Esophagus muscularis mucosa (tissue), 4 donors: ENCODE measurements at regions of chr22 and their contacts with region 1.

Region 1: DNA sequence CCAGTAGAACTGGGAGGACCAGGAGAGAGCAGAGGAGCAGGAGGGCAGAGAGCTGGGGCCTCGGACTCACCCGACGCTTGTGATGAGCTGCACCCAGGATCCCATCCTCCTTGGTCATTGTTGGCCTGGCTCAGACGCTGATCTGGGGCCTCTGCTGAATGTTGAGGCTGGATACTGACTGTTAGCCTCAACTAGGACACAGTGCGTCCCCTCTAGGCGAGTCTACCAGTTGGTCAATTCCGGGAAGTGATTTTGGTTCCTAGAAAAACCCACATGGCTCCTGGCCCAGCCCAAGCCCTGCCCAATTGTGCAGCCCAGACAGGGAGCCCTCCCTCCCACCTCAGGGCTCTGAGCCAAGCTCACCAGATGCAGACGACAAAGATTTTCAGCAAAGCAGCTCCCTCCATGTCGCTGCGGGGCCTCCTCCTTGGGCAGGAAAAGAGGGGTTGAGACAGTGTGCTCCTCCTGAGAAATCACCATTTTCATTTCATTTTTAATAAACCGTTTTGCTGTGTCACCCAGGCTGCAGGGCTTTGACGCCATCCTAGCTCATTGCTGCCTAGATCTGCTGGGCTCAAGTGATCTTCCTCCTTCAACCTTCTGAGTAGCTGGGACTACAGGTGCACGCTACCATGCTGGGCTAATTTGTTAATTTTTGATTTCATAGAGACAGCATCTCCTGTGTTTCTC is at the start of gene APOL4:
- DNase-seq: no peak
- H3K4me3 ChIP-seq: peak within 1 kb of the TSS in 2 of 4 donors; percentile 22 to 35
- H3K27ac ChIP-seq: peak within 1 kb of the TSS in 3 of 4 donors; percentile 13 to 57 (median 51)
- H3K4me1 ChIP-seq: peaks cover 19 to 30% (median 22%) of the 10 kb centered on the region in 4 donors
- H3K27me3 ChIP-seq: no peaks in the 10 kb centered on the region
- CTCF ChIP-seq: no peak
- EP300 ChIP-seq: no peak
- POLR2A ChIP-seq: no peak
- total RNA-seq, gene APOL4: 0.19 to 24.7 (median 1.6) TPM

Region 2: DNA sequence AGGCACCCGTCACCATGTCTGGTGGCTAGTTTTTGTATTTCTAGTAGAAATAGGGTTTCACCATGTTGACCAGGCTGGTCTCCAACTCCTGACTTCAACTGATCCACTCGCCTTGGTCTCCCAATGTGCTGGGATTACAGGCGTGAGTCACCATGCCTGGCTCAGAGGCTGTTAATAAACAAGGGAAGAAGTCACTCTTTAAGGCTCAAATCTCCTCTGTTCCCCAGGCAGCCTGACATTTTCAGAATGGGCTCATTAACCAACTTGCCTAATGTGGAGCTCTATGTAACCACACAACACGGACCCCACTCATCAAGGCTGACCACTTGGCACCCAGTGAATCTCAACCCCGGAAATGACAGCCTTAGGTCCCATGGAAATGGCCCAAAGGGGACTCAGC is 65.3 kb before region 1 on chr22:
- intact Hi-C with region 1: no loop called
- DNase-seq: no peak
- H3K4me3 ChIP-seq: no peak overlapping the region
- H3K27ac ChIP-seq: peak overlapping the region in 2 of 4 donors; percentile 28 to 70
- H3K4me1 ChIP-seq: peaks cover 0 to 4% (median 0%) of the 10 kb centered on the region in 4 donors
- H3K27me3 ChIP-seq: no peaks in the 10 kb centered on the region
- CTCF ChIP-seq: no peak
- EP300 ChIP-seq: no peak
- POLR2A ChIP-seq: no peak

Region 3: GRCh38 chr22:36258701-36259614 is 57.2 kb after region 1 on chr22:
- intact Hi-C with region 1: loop called (anchors 5 kb)
- DNase-seq: no peak
- H3K4me3 ChIP-seq: no peak overlapping the region
- H3K27ac ChIP-seq: peak overlapping the region; percentile 52 to 68 (median 64)
- H3K4me1 ChIP-seq: peaks cover 41 to 57% (median 49%) of the 10 kb centered on the region in 4 donors
- H3K27me3 ChIP-seq: no peaks in the 10 kb centered on the region
- CTCF ChIP-seq: no peak
- EP300 ChIP-seq: no peak
- POLR2A ChIP-seq: no peak